AG04450 (cell line): ENCODE measurements at regions of chrX and their contacts with region 1.

Region 1: GRCh38 chrX:119004920-119005524 is 30.6 kb downstream of the LONRF3 start:
- DNase-seq: no peak
- H3K4me3 ChIP-seq: no peak overlapping the region
- H3K27ac ChIP-seq: no peak overlapping the region
- H3K27me3 ChIP-seq: peaks cover 4% of the 10 kb centered on the region
- CTCF ChIP-seq: peak; percentile 84

Region 2: GRCh38 chrX:117768861-117769604 is 1236.0 kb before region 1 on chrX:
- CTCF ChIA-PET with region 1: no interaction called
- POLR2A ChIA-PET with region 1: no interaction called
- DNase-seq: no peak
- H3K4me3 ChIP-seq: no peak overlapping the region
- H3K27ac ChIP-seq: no peak overlapping the region
- H3K27me3 ChIP-seq: no peaks in the 10 kb centered on the region
- CTCF ChIP-seq: no peak

Region 3: GRCh38 chrX:118847676-118848075 is 157.3 kb before region 1 on chrX:
- CTCF ChIA-PET with region 1: interaction called, 13 read pairs
- POLR2A ChIA-PET with region 1: no interaction called
- DNase-seq: no peak
- H3K4me3 ChIP-seq: no peak overlapping the region
- H3K27ac ChIP-seq: no peak overlapping the region
- H3K27me3 ChIP-seq: no peaks in the 10 kb centered on the region
- CTCF ChIP-seq: peak; percentile 63

Region 4: GRCh38 chrX:119015407-119016237 is 10.6 kb after region 1 on chrX:
- CTCF ChIA-PET with region 1: interaction called, 16 read pairs
- POLR2A ChIA-PET with region 1: no interaction called
- DNase-seq: peak; percentile 41
- H3K4me3 ChIP-seq: no peak overlapping the region
- H3K27ac ChIP-seq: no peak overlapping the region
- H3K27me3 ChIP-seq: no peaks in the 10 kb centered on the region
- CTCF ChIP-seq: no peak

Region 5: GRCh38 chrX:119155416-119156035 is 150.5 kb after region 1 on chrX:
- CTCF ChIA-PET with region 1: no interaction called
- POLR2A ChIA-PET with region 1: no interaction called
- DNase-seq: no peak
- H3K4me3 ChIP-seq: no peak overlapping the region
- H3K27ac ChIP-seq: no peak overlapping the region
- H3K27me3 ChIP-seq: peaks cover 2% of the 10 kb centered on the region
- CTCF ChIP-seq: no peak

Region 6: GRCh38 chrX:119168104-119168503 is 163.1 kb after region 1 on chrX:
- CTCF ChIA-PET with region 1: no interaction called
- POLR2A ChIA-PET with region 1: no interaction called
- DNase-seq: no peak
- H3K4me3 ChIP-seq: no peak overlapping the region
- H3K27ac ChIP-seq: no peak overlapping the region
- H3K27me3 ChIP-seq: peaks cover 3% of the 10 kb centered on the region
- CTCF ChIP-seq: no peak